HEK293 (cell line): ENCODE measurements at regions of chr11 and their contacts with region 1.

Region 1: GRCh38 chr11:125091247-125091876 is 20.1 kb downstream of the TMEM218 start:
- H3K4me3 ChIP-seq: no peak overlapping the region
- H3K27ac ChIP-seq: no peak overlapping the region
- H3K4me1 ChIP-seq: no peaks in the 10 kb centered on the region
- CTCF ChIP-seq: peak; percentile 41; the same call in 1 of the 2 replicates

Region 2: DNA sequence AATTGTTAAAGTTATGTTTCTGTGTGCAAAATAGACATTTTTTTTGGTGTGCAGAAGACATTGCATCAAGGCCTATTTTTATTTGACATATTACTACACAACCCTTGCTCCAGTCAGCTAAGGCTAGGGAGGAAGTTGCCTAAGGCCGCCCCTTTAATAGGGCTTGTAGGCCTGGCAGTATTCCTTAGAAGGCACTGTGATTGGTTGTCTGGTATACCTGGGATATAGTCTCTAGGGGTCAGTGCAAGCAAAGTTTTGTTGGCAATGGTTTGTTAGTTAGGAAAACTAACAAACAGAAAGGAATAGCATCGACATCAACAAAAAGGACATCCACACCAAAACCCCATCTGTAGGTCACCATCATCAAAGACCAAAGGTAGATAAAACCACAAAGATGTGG is 120.4 kb before region 1 on chr11:
- CTCF ChIA-PET with region 1: interaction called, 10 read pairs
- POLR2A ChIA-PET with region 1: no interaction called
- H3K4me3 ChIP-seq: no peak overlapping the region
- H3K27ac ChIP-seq: no peak overlapping the region
- H3K4me1 ChIP-seq: no peaks in the 10 kb centered on the region
- CTCF ChIP-seq: no peak

Region 3: DNA sequence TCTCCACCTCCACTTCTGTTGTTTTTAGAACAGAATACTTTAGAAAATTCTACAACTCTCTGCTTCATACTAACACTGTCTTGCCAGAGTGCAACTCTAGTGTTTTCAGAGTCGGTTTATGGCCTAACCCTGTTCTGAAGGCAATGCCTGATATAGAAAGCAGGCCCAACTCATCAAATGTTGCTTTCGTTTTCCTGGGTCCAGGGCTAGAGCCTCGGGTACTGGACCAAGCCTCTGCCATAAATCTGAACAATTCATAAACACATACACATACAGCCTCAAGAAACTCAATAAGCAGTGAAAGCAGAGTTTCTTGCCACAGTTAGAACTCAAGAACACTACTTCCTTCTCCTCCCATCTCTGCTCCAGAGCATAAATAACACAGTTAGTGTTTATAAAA is 10.2 kb after region 1 on chr11:
- CTCF ChIA-PET with region 1: interaction called, 11 read pairs
- POLR2A ChIA-PET with region 1: no interaction called
- H3K4me3 ChIP-seq: no peak overlapping the region
- H3K27ac ChIP-seq: no peak overlapping the region
- H3K4me1 ChIP-seq: no peaks in the 10 kb centered on the region
- CTCF ChIP-seq: no peak

Region 4: GRCh38 chr11:125141686-125142535 is 50.5 kb after region 1 on chr11:
- CTCF ChIA-PET with region 1: interaction called, 83 read pairs
- POLR2A ChIA-PET with region 1: no interaction called
- H3K4me3 ChIP-seq: no peak overlapping the region
- H3K27ac ChIP-seq: no peak overlapping the region
- H3K4me1 ChIP-seq: no peaks in the 10 kb centered on the region
- CTCF ChIP-seq: peak; percentile 62; the same call in 1 of the 2 replicates

Region 5: DNA sequence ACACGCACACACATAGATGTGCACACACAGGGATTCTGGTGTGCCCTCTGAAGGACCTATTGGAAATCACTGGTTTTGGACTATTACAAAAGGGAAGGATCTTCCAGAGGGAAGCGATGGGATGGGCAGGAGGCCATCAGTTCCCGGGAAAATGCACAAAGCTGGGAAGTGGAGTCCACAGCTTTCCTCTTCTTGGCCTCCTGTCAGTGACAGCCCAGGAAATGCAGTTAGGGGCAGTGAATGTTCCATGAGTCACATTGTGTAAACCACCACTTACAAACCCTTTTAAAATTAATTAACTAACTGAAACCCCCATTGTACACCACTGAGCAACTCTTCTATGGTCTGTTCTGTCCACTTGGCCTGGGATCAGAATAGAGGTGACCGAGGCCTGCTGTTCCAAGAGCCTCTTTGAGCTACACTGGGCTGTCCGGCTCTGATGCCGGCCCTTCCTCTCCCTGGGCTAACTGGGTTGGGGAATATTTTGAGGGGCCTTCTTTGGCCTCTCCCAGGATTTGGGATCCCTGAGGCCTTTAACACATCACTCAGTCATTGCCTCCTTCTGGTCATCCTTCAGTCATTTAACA is 267.0 kb after region 1 on chr11:
- CTCF ChIA-PET with region 1: interaction called, 46 read pairs
- POLR2A ChIA-PET with region 1: no interaction called
- H3K4me3 ChIP-seq: no peak overlapping the region
- H3K27ac ChIP-seq: no peak overlapping the region
- H3K4me1 ChIP-seq: no peaks in the 10 kb centered on the region
- CTCF ChIP-seq: no peak

Region 6: GRCh38 chr11:125404776-125405435 is 313.5 kb after region 1 on chr11:
- CTCF ChIA-PET with region 1: interaction called, 27 read pairs
- POLR2A ChIA-PET with region 1: no interaction called
- H3K4me3 ChIP-seq: no peak overlapping the region
- H3K27ac ChIP-seq: no peak overlapping the region
- H3K4me1 ChIP-seq: no peaks in the 10 kb centered on the region
- CTCF ChIP-seq: peak; percentile 61

Region 7: GRCh38 chr11:125429166-125429707 is 337.9 kb after region 1 on chr11:
- CTCF ChIA-PET with region 1: interaction called, 81 read pairs
- POLR2A ChIA-PET with region 1: no interaction called
- H3K4me3 ChIP-seq: no peak overlapping the region
- H3K27ac ChIP-seq: no peak overlapping the region
- H3K4me1 ChIP-seq: no peaks in the 10 kb centered on the region
- CTCF ChIP-seq: peak; percentile 66